ENCODE measurements at regions of chr22 and their contacts with region 1.

Region 1: DNA sequence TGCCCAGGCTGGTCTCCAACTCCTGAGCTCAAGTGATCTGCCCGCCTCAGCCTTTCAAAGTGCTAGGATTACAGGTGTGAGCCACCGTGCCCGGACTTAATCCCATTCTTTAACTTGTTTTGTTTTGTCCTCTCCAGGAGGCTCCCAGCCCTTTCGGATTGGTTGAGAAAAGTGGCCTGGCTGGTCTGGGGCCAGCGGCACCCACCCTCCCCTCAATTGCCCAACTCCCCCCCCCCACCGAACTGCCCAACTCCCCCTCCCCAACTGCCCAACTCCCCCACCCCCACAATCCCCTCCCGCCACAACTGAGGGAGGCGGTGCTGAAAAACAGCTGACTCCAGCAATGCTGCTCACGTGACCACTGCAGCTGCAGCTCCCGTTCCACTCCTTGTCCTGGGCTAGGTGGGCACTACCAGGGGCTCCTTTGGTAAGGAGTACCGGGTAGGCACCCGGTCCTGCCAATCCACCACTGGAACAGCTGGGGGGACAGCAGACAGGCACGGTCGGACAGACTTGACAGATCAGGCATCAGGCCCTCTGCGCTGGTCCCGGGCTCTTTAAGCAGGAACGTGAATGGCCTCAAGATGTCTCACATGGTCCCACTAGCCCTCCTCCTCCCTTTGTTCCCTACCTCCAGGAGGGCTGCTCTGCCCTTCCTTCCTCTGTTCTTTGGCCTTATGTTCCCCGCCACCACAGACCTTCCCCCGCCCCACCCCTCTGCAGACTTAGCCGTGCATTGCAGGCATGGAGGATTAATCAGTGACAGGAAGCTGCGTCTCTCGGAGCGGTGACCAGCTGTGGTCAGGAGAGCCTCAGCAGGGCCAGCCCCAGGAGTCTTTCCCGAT is at the start of gene TCN2:
- DNase-seq: peak; percentile 13 to 57 (median 18)
- H3K4me3 ChIP-seq: peak within 1 kb of the TSS; percentile 57 to 81
- H3K4me3 Mint-ChIP-seq: peak within 1 kb of the TSS; percentile 86 to 94 (median 90)
- H3K27ac ChIP-seq: no peak within 1 kb of the TSS
- H3K27ac Mint-ChIP-seq: peak within 1 kb of the TSS in 6 of 7 donors; percentile 50 to 92 (median 64)
- H3K4me1 ChIP-seq: peaks cover 16% of the 10 kb centered on the region
- H3K4me1 Mint-ChIP-seq: peaks cover 11 to 30% (median 20%) of the 10 kb centered on the region in 4 donors
- H3K27me3 ChIP-seq: no peaks in the 10 kb centered on the region
- H3K27me3 Mint-ChIP-seq: peaks cover 0 to 1% of the 10 kb centered on the region in 2 donors
- total RNA-seq, gene TCN2: 0.93 to 1.2 TPM

Region 2: DNA sequence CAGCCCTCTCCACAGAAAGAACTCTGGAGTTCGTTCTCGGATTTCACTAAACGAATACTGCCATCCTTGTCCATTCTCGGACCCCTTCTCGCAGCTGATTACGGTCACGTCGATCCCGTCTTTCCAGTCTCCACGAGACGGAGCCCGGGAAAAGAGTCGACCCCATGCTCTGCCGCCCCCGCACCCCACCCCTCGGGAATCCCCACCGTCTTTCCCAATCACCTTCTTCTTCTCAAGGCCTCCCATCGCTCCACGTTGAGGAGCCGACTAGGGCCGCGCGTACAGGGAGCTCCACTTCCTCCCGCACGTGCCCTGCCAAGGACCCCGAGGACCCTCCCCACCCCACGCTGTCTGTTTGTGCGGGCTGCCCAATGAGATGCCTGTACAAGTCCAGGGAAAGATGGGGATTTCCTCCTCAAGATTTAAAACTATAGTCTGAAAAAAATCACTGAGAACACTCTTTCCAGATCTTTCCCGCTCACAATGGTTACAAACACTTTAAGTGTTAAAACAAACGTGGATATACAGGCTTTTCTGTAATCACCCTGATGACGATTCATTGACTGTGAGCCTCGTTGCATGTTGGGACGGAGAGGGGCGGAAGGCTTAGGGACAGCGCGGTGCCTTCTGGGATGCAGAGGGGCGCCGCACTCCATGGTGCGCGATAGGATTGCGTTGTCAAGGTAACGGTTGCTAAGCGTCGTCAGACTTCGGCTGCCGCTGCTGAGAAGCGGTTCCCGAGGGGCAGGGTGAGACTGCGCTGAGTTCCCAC is 14.9 kb before region 1 on chr22 and contains the start of gene PES1:
- CTCF ChIA-PET with region 1: interaction called, 7 read pairs
- POLR2A ChIA-PET with region 1: interaction called, 19 read pairs
- intact Hi-C with region 1: no loop called
- DNase-seq: peak; percentile 96 to 98 (median 97)
- H3K4me3 ChIP-seq: peak within 1 kb of the TSS; percentile 50 to 99
- H3K4me3 Mint-ChIP-seq: no peak within 1 kb of the TSS
- H3K27ac ChIP-seq: peak within 1 kb of the TSS; percentile 78
- H3K27ac Mint-ChIP-seq: peak within 1 kb of the TSS in 1 of 7 donors; percentile 82
- H3K4me1 ChIP-seq: peaks cover 22% of the 10 kb centered on the region
- H3K4me1 Mint-ChIP-seq: peaks cover 0 to 10% (median 3%) of the 10 kb centered on the region in 4 donors
- H3K27me3 ChIP-seq: no peaks in the 10 kb centered on the region
- H3K27me3 Mint-ChIP-seq: peaks cover 3 to 7% of the 10 kb centered on the region in 2 donors
- total RNA-seq, gene PES1: 50.1 to 51.6 TPM

Measured in CD4-positive, alpha-beta memory T cell (primary cell).